GM12878 (cell line): ENCODE measurements at regions of chrX and their contacts with region 1.

Region 1: GRCh38 chrX:72018277-72019112 is 107.8 kb downstream of the NHSL2 start:
- DNase-seq: no peak
- ATAC-seq: peak; percentile 92
- H3K4me3 ChIP-seq: no peak overlapping the region
- H3K27ac ChIP-seq: no peak overlapping the region
- H3K4me1 ChIP-seq: peaks cover 9% of the 10 kb centered on the region
- H3K27me3 ChIP-seq: no peaks in the 10 kb centered on the region
- CTCF ChIP-seq: peak; percentile 44 to 58 (median 58); a peak in 5 of 6 replicates
- EP300 ChIP-seq: no peak
- POLR2A ChIP-seq: no peak
- RAD21 ChIP-seq: peak; percentile 61

Region 2: GRCh38 chrX:71809886-71810285 is 208.6 kb before region 1 on chrX:
- CTCF ChIA-PET with region 1: no interaction called
- POLR2A ChIA-PET with region 1: no interaction called
- RAD21 ChIA-PET with region 1: no interaction called
- SMC1A ChIA-PET with region 1: no interaction called
- in situ Hi-C with region 1: no loop called
- intact Hi-C with region 1: no loop called
- DNase-seq: no peak
- ATAC-seq: no peak
- H3K4me3 ChIP-seq: no peak overlapping the region
- H3K27ac ChIP-seq: no peak overlapping the region
- H3K4me1 ChIP-seq: no peaks in the 10 kb centered on the region
- H3K27me3 ChIP-seq: no peaks in the 10 kb centered on the region
- CTCF ChIP-seq: no peak
- EP300 ChIP-seq: no peak
- POLR2A ChIP-seq: no peak
- RAD21 ChIP-seq: no peak

Region 3: DNA sequence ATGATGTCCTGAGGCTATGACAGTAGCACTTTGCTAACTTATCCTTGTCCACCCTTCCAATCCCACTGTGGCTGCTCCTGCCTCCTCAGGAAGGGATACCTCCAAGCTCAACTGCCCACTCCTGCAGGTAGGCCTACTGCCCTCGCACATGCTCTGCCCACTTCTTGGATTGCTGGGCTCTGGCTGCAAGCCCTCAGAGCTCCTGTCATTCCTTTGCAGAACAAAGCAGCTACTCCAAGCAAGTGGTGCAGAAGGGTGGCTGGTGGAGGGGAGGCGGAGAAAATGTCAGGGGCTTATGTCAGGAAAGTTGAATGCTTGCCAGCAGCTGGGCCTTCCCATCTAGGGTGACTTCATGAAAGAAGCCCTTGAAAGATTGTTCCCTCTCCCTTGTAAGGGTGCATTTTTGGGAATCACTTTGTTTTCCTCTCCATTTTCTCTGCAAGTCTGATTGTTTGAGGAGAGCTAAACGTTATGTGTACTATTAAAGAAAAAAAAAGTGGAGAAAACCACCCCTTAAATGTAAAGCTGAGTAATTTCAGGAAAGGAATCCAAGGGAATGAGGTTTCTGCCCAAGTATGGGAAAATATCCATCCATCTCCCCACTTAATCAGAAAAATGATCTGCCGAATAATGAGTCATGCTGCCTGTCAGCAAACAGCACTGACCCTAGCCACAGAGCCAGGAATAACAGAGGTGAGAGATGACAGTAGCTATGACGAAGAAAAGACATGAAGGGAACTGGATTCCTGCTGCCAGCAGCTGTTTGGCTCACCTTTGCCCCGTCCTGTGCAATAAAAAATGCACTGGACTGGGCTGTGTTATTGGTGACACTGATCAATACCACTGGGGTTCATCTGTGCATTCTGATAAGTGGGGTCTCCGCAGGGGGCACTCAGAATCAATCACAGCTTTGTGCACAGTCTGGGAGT is 11.3 kb after region 1 on chrX:
- CTCF ChIA-PET with region 1: interaction called, 40 read pairs
- POLR2A ChIA-PET with region 1: interaction called, 3 read pairs
- RAD21 ChIA-PET with region 1: interaction called, 6 read pairs
- SMC1A ChIA-PET with region 1: interaction called, 6 read pairs
- in situ Hi-C with region 1: no loop called
- intact Hi-C with region 1: no loop called
- DNase-seq: no peak
- ATAC-seq: no peak
- H3K4me3 ChIP-seq: no peak overlapping the region
- H3K27ac ChIP-seq: no peak overlapping the region
- H3K4me1 ChIP-seq: no peaks in the 10 kb centered on the region
- H3K27me3 ChIP-seq: no peaks in the 10 kb centered on the region
- CTCF ChIP-seq: no peak
- EP300 ChIP-seq: no peak
- POLR2A ChIP-seq: no peak
- RAD21 ChIP-seq: no peak